Activated CD4-positive, alpha-beta T cell treated with anti-CD3 and anti-CD28 coated beads, Interleukin-2, amount 10 ng/mL, durations not matched to agents 24 days and 14 days (primary cell): ENCODE measurements at regions of chr13 and their contacts with region 1.

Region 1: DNA sequence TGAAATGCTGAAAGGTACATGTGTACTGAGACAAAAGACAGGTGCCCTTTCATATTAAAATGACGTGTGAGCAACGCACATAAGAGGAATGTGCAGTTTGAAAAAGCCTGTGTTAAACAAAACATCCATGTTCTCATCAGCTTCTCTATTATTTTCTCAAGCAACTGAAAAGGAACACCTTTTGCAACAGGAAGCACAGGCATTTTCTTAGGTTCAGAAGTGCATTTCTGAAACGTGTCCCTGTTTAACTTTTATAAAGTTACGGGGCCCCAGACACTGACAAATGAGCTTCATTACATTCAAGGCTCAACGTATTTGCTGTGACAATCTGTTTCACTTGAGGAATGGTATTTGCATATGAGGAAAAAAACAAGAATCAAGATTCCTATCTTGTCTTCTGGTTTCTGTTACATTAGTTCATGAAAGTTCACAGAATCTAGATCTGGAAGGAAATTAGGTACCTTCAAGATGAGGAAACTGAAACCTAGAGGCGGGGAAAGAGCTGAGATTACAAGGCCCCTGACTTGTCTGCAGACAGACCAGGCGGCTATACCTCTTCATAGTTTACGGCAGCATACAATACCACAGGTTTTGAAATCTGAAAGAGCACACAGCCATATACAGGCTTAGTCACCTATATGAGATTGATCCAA is 431.7 kb downstream of the KLF12 start:
- DNase-seq: peak; percentile 81
- H3K4me3 Mint-ChIP-seq: peak overlapping the region; percentile 62
- H3K27ac Mint-ChIP-seq: peak overlapping the region; percentile 57
- H3K4me1 Mint-ChIP-seq: peaks cover 26% of the 10 kb centered on the region
- H3K27me3 Mint-ChIP-seq: no peaks in the 10 kb centered on the region

Region 2: DNA sequence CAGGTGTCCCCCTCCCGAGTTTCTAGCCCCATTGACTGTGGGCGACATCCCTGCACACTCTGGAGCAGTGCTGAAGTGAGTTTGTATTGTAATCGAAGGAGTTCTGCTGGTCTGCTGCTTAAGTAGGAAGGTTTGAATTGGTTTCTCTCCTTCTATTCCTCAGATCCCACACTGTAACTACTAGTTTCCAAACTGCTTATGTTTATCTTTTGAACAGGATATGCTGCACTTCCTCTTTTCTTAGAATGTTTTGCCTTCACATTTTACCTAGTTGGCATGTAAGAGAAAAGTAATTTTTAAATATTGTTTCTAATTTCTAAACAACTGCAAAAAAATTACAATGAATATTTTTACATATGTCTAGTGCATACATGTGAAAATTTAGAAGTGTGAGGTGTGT is 80.2 kb before region 1 on chr13:
- intact Hi-C with region 1: loop called (anchors 5 kb)
- DNase-seq: no peak
- H3K4me3 Mint-ChIP-seq: peak overlapping the region; percentile 49
- H3K27ac Mint-ChIP-seq: no peak overlapping the region
- H3K4me1 Mint-ChIP-seq: peaks cover 37% of the 10 kb centered on the region
- H3K27me3 Mint-ChIP-seq: peaks cover 4% of the 10 kb centered on the region